GM18951 (cell line): ENCODE measurements at regions of chr2 and their contacts with region 1.

Region 1: DNA sequence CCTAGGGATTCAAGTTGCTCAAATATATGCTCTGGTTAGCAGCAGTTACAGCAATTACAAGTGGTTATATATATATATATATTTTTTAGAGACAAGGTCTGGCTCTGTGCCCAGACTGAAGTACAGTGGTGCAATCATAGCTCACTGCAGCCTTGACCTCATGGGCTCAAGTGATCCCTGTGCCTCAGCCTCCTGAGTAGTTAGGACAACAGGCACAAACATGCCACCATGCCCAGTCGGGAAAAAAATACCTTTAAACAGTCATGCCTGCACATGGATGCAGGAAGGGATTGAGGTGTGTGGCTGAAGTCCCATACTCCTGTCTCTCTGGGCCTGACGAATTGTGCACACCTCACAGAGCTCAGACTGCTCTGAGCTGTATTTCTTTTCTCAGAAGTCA is 19.6 kb upstream of the DNAH7 start:
- POLR2A ChIP-seq: no peak

Region 2: GRCh38 chr2:195445639-195446038 is 642.6 kb before region 1 on chr2:
- in situ Hi-C with region 1: no loop called
- POLR2A ChIP-seq: no peak

Region 3: DNA sequence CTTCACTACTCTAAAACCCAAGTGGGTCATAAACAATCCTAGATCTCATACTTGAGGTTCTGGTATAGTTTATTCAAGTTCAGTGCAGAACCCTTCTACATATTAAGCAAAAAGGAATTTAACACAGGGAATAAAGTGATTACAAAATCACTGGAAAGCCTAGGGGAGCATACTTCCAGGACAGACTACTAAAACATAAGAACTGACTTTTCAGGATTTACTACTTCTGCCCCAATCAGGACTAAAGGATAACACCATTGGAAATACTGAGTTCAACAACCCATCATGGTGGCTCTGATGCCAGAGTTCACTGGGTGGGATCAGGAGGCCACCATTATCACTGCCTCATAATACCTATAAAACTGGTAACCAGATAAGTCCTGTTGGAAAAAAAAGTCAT is 143.1 kb before region 1 on chr2:
- in situ Hi-C with region 1: no loop called
- POLR2A ChIP-seq: no peak

Region 4: DNA sequence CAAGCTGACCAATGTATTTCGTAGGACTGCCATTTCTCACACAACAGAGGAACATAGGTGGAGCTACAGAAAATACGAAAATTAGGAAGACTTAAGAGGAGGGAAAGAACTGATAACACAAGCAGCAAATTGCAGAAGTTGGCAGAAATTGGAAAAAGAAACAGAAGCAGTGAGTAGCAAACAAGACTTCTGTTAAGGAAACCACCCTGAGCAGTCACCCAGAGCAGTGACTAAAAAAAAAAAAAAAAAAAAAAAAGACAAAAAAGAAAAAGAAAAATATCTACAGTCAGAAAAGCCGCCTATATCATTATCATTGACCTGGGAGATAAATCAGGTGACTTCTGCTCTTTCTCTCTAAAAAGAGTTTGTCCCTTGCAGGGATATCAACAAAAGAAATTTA is 61.7 kb after region 1 on chr2:
- in situ Hi-C with region 1: no loop called
- POLR2A ChIP-seq: no peak

Region 5: GRCh38 chr2:196289000-196289399 is 200.8 kb after region 1 on chr2:
- in situ Hi-C with region 1: loop called (anchors 10 kb)
- POLR2A ChIP-seq: no peak

Region 6: DNA sequence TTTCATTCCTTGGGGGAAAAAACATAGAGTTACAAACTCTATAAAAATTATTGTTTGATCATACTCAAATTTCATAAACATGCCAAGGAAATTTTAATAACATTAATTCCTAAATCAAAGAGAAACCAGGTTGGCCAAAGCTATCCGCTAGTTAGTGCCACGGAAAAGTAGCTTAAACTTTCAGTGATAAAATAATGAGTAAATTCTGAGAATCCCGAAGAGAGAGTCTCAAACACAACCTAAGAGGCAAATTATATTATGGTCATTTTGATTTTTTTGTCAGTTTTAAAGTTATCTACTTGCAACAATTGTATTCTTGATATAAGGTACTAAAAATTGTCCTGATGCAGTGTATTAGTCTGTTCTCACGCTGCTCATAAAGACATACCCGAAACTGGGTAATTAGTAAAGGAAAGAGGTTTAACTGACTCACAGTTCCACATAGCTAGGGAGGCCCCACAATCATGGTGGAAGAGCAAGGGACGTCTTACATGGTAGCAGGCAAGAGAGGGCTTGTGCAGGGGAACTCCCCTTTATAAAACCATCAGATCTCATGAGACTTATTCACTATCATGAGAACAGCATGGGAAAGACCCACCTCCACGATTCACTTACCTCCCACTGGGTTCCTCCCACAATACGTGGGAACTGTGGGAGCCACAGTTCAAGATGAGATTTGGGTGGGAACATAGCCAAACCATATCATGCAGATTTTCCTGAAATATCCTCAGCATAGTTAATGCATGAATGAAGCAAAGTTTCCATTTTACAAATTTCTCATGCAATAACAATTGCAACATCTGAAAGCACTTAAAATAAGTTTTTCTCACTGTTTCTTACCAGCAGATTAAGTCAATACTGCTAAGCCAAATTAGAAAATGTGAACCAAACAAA is 289.0 kb after region 1 on chr2:
- in situ Hi-C with region 1: no loop called
- POLR2A ChIP-seq: no peak